ENCODE measurements at regions of chr1 and their contacts with region 1.

Region 1: DNA sequence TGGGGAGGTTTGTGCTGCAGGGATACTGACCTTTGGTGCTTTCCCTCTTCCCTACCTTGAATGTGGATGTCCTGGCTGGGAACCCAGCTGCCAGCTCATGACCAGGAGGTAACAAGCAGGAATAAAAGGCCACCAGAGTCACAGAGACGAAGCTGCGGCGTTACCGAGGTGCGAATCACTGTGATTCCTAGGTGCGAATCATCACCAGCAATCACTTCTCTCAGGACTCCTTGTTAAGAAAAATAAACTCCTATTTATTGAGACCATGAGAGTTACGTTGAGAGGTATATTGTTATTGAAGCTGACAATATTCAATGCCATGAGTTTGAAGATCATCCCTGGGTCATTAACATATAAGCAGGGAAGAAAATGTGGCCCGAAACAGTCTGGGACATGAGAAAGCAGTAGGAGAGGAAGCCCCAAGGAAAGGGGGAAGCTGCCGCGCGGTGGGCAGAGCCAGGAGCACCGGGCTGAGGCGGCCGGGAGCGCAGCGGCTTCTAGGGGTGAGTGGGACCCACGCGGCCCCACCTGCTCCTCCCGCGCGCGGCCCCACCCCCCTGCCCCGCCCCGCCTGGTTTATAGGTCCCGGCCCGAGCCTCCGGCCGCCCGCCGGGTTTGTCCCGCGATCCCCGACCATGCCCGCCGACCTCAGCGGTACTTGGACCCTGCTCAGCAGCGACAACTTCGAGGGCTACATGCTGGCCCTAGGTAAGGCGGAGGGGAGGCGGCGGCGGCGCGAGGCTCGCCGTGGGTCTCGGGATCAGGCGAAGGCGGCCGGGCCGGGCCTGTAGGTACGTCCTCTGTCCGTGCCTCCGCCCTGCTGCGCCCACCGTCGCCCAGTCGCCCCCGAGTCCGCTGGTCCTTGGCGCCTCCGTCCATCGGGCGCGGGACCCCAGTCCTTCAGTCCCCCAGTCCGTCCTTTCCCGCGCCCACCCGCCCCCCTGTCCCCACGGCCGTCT is at the start of gene RBP7:
- DNase-seq: peak; percentile 40 to 46
- H3K4me3 ChIP-seq: peak within 1 kb of the TSS; percentile 53
- H3K4me3 Mint-ChIP-seq: peak within 1 kb of the TSS; percentile 82
- H3K27ac Mint-ChIP-seq: no peak within 1 kb of the TSS
- H3K4me1 ChIP-seq: no peaks in the 10 kb centered on the region
- H3K4me1 Mint-ChIP-seq: peaks cover 14% of the 10 kb centered on the region
- H3K27me3 ChIP-seq: no peaks in the 10 kb centered on the region
- H3K27me3 Mint-ChIP-seq: no peaks in the 10 kb centered on the region
- CTCF ChIP-seq: no peak
- total RNA-seq, gene RBP7: 10.3 and 11.7 TPM in 2 replicates

Region 2: DNA sequence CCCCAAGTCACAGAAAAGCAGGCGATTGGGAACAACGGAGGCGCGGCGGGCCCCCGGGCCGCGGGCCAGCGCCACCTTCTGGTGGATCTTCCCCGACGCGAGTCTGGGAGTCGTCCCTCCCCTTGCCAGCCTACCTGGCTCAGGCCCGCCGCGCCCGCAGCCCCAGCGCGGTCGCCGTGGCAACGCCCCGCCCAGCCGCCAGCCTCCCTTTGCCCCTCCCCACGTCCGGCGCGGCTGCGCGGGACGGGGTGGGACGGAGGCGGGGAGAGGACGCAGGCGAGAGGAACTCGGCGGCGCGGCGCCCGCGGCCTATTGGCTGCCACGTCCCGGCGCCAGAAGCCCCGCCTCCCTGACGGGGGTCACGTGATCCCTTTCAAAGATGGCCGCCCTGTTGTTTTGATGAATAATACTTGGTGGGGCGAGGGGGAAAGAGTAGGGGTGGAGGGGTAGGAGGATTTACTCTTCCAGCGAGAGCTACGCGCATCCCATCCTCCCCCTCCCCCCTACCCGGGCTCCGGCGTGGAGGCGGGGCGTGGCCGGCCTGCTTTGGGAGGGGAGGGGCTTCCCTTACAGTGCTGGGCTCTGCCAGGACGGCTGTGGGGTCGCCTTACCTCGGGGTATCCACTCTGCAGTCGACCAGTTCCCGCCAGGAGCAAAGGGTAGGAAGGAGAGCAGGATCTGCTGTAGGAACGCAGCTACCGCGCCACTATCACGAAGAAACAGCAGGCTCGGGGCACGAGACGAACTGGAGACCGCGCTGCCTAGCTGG is 35.9 kb after region 1 on chr1 and contains the start of gene UBE4B:
- CTCF ChIA-PET with region 1: no interaction called
- POLR2A ChIA-PET with region 1: no interaction called
- intact Hi-C with region 1: loop called (anchors 5 kb)
- DNase-seq: peak; percentile 96 to 98
- H3K4me3 ChIP-seq: peak within 1 kb of the TSS; percentile 78
- H3K4me3 Mint-ChIP-seq: peak within 1 kb of the TSS; percentile 98
- H3K27ac Mint-ChIP-seq: peak within 1 kb of the TSS; percentile 96
- H3K4me1 ChIP-seq: peaks cover 18% of the 10 kb centered on the region
- H3K4me1 Mint-ChIP-seq: peaks cover 14% of the 10 kb centered on the region
- H3K27me3 ChIP-seq: no peaks in the 10 kb centered on the region
- H3K27me3 Mint-ChIP-seq: no peaks in the 10 kb centered on the region
- CTCF ChIP-seq: peak; percentile 78 to 83
- total RNA-seq, gene UBE4B: 40.2 and 40.3 TPM in 2 replicates

Region 3: GRCh38 chr1:10204003-10204642 is 207.2 kb after region 1 on chr1:
- CTCF ChIA-PET with region 1: no interaction called
- POLR2A ChIA-PET with region 1: no interaction called
- intact Hi-C with region 1: no loop called
- DNase-seq: no peak
- H3K4me3 ChIP-seq: no peak overlapping the region
- H3K4me3 Mint-ChIP-seq: no peak overlapping the region
- H3K27ac Mint-ChIP-seq: no peak overlapping the region
- H3K4me1 ChIP-seq: no peaks in the 10 kb centered on the region
- H3K4me1 Mint-ChIP-seq: no peaks in the 10 kb centered on the region
- H3K27me3 ChIP-seq: no peaks in the 10 kb centered on the region
- H3K27me3 Mint-ChIP-seq: no peaks in the 10 kb centered on the region
- CTCF ChIP-seq: no peak